Activated B cell treated with CpG ODN at 0.5 μM for 24 hours (primary cell): ENCODE measurements at regions of chr14 and their contacts with region 1.

Region 1: GRCh38 chr14:77097700-77098528 is at the start of gene CIPC:
- DNase-seq: peak; percentile 96
- ATAC-seq: peak; percentile 86
- H3K4me3 Mint-ChIP-seq: peak within 1 kb of the TSS; percentile 99
- H3K27ac Mint-ChIP-seq: peak within 1 kb of the TSS; percentile 98
- H3K4me1 Mint-ChIP-seq: peaks cover 72% of the 10 kb centered on the region
- H3K27me3 Mint-ChIP-seq: no peaks in the 10 kb centered on the region
- CTCF ChIP-seq: no peak
- total RNA-seq, gene CIPC: 26.6 and 28.5 TPM in 2 replicates

Region 2: GRCh38 chr14:77111043-77111442 is 13.1 kb after region 1 on chr14:
- CTCF ChIA-PET with region 1: interaction called, 8 read pairs
- POLR2A ChIA-PET with region 1: interaction called, 7 read pairs
- intact Hi-C with region 1: loop called (anchors 1 kb)
- DNase-seq: no peak
- ATAC-seq: no peak
- H3K4me3 Mint-ChIP-seq: no peak overlapping the region
- H3K27ac Mint-ChIP-seq: no peak overlapping the region
- H3K4me1 Mint-ChIP-seq: peaks cover 26% of the 10 kb centered on the region
- H3K27me3 Mint-ChIP-seq: no peaks in the 10 kb centered on the region
- CTCF ChIP-seq: no peak

Region 3: DNA sequence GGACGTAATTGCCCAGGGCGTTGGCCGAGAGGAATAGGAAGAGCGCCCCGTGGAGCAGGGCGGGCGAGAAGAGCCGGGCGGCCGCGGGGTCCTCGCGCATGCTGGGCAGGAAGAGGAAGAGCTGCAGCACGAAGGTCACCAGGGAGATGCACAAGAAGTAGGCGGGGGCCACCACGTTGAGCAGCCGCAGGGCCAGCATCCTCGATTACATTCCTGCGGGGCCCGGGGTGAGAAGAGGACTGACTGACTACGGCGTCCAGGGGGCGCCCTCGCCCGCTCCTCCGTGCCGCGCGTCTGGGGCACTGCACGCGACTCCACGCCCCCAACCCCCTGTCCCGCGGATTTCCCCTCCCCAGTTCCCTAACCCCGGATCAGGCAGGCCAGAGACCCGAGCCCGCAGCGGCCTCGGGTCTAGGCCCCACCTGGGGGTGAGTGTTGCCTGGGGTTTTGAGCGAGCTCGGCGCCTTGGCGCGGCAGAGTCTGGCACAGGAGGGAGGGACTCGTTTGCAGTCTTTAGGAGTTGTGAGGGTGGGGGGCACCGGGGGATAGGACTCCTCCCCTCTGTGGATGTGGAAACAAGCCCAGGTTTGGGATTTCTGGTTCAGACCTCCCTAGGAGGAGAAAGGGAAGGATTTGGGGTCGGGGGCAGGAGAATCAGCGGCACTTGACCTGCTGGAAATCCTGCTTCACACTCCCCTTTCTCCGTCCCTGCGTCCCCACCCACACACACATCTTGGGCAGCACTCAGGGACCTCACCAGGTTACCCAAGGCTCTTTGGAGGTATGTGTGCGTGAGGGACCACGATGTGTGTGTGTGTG is 41.8 kb after region 1 on chr14:
- CTCF ChIA-PET with region 1: no interaction called
- POLR2A ChIA-PET with region 1: no interaction called
- intact Hi-C with region 1: no loop called
- DNase-seq: peak; percentile 56
- ATAC-seq: peak; percentile 74
- H3K4me3 Mint-ChIP-seq: peak overlapping the region; percentile 76
- H3K27ac Mint-ChIP-seq: no peak overlapping the region
- H3K4me1 Mint-ChIP-seq: peaks cover 26% of the 10 kb centered on the region
- H3K27me3 Mint-ChIP-seq: peaks cover 64% of the 10 kb centered on the region
- CTCF ChIP-seq: no peak

Region 4: DNA sequence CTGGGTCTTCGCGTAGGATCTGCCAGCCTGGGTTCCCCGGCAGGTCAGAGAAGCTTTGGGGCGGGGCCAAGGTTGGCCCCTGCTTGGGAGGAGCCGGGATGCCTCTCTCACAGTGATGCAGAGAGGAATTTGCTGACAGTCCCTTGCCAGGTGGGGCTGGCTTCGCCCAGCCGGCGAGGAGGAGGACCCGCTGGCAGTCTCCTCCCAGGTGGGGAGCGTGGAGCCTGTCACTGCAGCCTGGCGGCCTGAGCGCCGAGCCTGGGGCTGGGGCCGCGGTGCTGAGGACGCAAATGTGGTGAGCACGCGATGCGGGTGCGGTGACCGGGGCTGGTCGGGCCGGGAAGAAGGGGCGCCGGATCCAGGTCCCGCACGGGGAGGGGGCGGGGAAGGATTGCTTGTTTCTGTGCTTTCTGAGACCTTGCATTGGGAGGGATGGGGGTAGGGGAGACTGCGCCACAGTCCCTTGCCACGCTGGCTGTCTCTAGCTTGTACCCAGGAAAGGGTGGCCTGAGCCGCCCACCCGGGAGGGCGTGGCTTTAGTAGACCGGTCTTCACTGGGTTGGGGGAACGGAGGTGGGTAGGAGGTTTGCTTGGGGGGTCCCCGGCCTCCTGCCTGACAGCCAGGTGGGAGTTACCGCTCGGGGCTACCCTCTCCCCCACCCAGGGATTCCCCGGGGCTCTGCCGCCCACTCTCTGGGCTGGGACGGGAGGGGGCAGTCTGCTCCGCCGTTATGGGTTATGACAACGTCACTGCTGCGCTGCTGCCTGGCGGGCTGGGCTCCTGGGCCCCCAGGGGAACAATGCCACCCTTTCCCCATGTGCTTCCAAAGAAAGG is 83.9 kb after region 1 on chr14 and contains the start of gene TMEM63C:
- CTCF ChIA-PET with region 1: no interaction called
- POLR2A ChIA-PET with region 1: no interaction called
- intact Hi-C with region 1: loop called (anchors 1 kb)
- DNase-seq: peak; percentile 44
- ATAC-seq: peak; percentile 89
- H3K4me3 Mint-ChIP-seq: peak within 1 kb of the TSS; percentile 80
- H3K27ac Mint-ChIP-seq: no peak within 1 kb of the TSS
- H3K4me1 Mint-ChIP-seq: peaks cover 20% of the 10 kb centered on the region
- H3K27me3 Mint-ChIP-seq: peaks cover 8% of the 10 kb centered on the region
- CTCF ChIP-seq: no peak
- total RNA-seq, gene TMEM63C: 0.15 and 1.5 TPM in 2 replicates